ENCODE measurements at regions of chr11 and their contacts with region 1.

Region 1: DNA sequence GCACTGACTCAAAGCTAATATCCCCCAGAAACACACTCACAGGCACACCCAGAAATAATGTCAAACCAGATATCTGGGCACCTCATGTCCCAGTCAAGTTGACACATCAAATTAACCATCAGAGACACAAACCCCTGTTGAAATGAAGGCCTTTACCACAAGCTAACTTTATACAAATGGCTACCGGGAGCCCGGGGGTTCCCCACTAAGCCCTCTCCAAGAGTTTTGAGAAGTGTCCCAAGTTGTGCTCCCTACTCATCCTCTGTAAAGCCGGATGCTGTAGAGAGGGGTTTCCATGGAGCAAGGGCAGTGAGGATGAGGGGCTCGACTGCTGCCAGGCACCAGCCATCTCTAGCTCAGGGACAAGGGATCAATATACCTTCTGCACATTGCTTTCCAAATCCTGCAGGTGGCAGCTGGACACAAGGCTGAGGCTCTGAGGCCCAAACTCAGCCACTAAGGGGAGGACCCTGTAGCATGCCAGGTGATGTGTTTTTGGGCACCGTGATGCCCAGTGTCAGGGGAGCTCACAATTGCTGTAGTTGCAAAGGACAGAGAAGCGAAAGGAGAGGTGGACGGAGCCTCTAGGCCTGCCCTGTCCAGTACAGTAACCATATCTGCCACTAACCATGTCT is 145.7 kb downstream of the TTC17 start:
- DNase-seq: peak; percentile 11
- ATAC-seq: peak; percentile 45
- H3K4me3 Mint-ChIP-seq: no peak overlapping the region
- H3K27ac Mint-ChIP-seq: no peak overlapping the region
- H3K4me1 Mint-ChIP-seq: peaks cover 5% of the 10 kb centered on the region
- H3K27me3 Mint-ChIP-seq: peaks cover 4% of the 10 kb centered on the region
- CTCF ChIP-seq: no peak

Region 2: DNA sequence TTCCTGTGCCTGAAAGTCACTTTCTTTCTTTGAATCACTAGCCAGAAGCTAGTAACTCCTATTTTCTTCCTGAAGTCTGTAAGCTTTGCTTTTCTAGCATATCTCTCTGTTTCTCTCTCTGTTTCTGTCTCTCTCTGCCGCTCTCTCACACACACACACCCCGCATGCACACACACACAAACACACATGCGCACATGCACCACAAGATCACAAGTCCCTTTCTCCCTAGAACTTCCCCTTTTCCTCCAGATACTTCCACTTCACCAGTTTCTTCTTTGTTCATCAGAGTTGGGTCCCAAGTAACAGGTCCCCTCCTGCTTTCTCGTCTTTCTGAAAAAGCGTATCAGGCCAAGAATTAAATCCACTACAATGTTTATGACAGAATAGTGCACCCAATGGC is 27.6 kb after region 1 on chr11:
- CTCF ChIA-PET with region 1: no interaction called
- POLR2A ChIA-PET with region 1: no interaction called
- intact Hi-C with region 1: no loop called
- DNase-seq: no peak
- ATAC-seq: no peak
- H3K4me3 Mint-ChIP-seq: no peak overlapping the region
- H3K27ac Mint-ChIP-seq: no peak overlapping the region
- H3K4me1 Mint-ChIP-seq: no peaks in the 10 kb centered on the region
- H3K27me3 Mint-ChIP-seq: peaks cover 15% of the 10 kb centered on the region
- CTCF ChIP-seq: no peak

Region 3: DNA sequence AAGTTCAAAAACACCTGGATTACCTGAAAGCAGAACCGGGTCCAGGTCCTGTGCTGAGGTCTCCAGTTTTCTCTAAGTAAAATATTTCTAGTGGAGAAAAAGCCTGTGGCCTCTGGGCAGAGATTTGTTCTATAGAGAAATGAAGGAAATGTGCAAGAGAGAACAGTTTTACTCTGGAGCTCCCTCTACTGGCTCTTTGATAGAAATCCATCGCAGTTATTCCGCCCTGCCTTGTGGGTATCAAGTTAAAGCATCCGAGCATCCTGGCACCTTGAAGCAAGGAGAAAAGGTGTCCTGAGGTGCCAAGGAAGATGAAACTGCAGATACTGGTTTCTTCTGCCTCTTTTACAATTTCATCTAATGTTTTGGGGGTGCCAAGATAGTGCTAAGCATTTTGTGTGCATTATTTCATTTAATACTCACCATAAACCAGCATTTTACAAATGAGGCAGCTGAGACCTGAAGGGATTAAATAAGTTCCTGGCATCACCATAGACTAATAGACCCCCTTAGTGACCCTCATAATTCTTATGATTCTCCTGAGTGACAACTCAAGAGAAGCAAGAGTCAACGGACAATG is 63.1 kb after region 1 on chr11:
- CTCF ChIA-PET with region 1: interaction called, 12 read pairs
- POLR2A ChIA-PET with region 1: no interaction called
- intact Hi-C with region 1: no loop called
- DNase-seq: no peak
- ATAC-seq: peak; percentile 66
- H3K4me3 Mint-ChIP-seq: no peak overlapping the region
- H3K27ac Mint-ChIP-seq: no peak overlapping the region
- H3K4me1 Mint-ChIP-seq: no peaks in the 10 kb centered on the region
- H3K27me3 Mint-ChIP-seq: peaks cover 42% of the 10 kb centered on the region
- CTCF ChIP-seq: peak; percentile 76